Kidney (tissue), 22 donors: ENCODE measurements at regions of chr17 and their contacts with region 1.

Region 1: DNA sequence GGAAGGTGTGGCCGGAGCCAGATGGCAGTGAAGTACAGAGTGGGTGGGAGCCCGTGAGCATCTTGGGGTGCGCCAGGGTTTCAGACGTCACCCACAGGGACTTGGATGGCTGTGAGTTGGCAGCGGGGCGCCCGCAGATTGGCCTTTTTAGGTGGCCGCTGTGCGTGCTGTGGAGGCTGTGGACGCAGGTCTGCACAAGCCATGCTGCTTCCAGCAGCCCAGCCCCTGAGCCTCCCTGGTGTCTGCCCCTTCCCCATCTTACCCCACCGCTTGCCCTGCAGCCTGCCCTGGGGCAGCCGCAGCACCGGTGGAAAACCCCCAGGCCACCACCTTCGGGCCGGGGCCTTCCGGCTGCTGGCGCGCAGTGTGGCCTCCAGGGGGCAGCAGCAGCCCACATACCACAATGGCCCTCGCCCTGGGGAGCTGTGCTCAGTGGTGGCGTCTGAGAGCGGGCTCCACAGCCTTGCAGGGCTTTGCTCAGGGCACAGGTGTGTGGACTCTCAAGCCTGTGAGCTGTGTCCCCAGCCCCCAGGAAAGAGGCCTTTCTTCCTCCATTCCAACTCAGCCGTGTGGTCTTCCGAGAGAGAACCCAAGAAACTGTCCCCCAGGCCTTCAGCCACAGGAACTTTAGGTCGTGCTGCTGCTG is 11.8 kb downstream of the ENDOV start:
- DNase-seq: peak; percentile 71 to 90 (median 81)
- H3K4me3 ChIP-seq: no peak overlapping the region
- H3K27ac ChIP-seq: no peak overlapping the region
- H3K4me1 ChIP-seq: peaks cover 0 to 5% (median 0%) of the 10 kb centered on the region in 3 donors
- H3K27me3 ChIP-seq: no peaks in the 10 kb centered on the region
- CTCF ChIP-seq: peak; percentile 96

Region 2: GRCh38 chr17:79691931-79692330 is 734.9 kb before region 1 on chr17:
- intact Hi-C with region 1: no loop called
- DNase-seq: no peak
- H3K4me3 ChIP-seq: no peak overlapping the region
- H3K27ac ChIP-seq: no peak overlapping the region
- H3K4me1 ChIP-seq: peaks cover 0 to 7% (median 0%) of the 10 kb centered on the region in 3 donors
- H3K27me3 ChIP-seq: no peaks in the 10 kb centered on the region
- CTCF ChIP-seq: no peak

Region 3: DNA sequence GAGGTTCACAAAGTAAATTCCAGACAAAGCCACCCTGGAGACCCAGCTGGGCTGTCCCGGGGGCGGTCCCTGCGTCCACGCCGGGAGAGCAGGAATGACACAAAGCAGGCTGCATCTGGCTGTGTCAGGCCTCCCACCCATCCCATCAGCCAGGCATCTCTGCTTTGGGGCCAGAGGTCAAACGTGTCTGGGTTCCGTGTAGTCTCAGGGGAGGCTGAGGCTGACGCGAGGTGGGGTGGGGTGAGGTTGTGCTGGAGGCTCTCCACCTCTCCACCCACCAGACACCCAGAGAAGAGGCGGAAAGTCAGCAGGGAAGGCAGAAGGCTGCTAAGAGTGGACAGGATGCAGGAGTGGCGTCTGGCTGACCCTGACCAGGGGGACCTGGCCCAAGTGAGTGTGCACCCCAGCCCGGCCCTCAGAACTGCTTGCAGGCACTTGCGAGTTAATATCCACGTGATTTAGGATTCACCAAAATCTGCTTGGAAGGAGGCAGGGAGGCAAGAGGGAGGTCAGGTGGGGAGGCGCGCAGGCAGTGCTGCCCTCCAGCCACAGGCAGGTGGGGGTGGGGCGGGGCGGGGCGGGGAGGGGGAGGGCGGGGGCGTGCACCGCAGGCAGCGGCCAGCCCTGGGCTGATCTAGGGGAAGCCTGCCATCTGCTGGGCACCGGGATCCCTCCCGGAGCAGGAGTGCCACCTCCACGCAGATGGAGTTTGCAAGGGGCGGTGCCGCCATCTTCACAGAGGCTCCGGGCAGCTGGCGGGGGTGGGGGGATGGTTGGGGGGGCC is 435.5 kb before region 1 on chr17:
- intact Hi-C with region 1: no loop called
- DNase-seq: peak; percentile 87 to 95 (median 92)
- H3K4me3 ChIP-seq: peak overlapping the region in 1 of 3 donors; percentile 35
- H3K27ac ChIP-seq: no peak overlapping the region
- H3K4me1 ChIP-seq: peaks cover 6 to 45% (median 39%) of the 10 kb centered on the region in 3 donors
- H3K27me3 ChIP-seq: no peaks in the 10 kb centered on the region
- CTCF ChIP-seq: peak; percentile 79

Region 4: DNA sequence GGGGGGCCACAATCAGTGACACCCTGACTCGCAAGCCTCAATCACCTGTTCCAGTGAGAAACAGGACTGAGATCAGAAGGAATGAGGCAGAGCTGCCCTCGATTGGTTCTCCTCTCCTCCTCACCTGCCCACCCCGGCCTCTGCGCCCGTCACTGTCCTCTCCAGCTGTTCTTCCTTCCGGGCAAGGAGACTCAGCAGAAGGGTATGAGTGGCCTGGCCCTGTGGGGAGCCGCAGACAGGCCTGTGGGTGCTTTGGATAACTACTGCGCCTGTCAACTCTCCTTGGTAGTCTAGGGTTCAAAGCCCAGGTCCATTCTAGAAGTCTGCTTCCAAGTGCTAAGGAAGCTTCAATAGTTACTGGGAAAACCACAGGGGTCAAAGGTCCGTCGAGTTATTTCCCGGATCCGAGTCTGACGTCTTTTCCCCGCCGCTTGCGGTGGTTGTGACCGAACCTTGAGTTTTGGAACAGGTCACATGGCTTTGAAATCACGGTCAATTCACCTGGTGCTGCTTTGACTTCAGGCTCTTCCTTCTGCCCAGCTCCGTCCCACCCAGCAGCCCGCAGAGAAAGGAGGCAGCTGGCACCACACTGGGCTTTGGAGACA is 248.7 kb before region 1 on chr17:
- intact Hi-C with region 1: no loop called
- DNase-seq: no peak
- H3K4me3 ChIP-seq: no peak overlapping the region
- H3K27ac ChIP-seq: no peak overlapping the region
- H3K4me1 ChIP-seq: no peaks in the 10 kb centered on the region
- H3K27me3 ChIP-seq: no peaks in the 10 kb centered on the region
- CTCF ChIP-seq: no peak

Region 5: GRCh38 chr17:80575057-80575875 is 148.5 kb after region 1 on chr17:
- intact Hi-C with region 1: loop called (anchors 10 kb)
- DNase-seq: peak; percentile 87 to 90 (median 88)
- H3K4me3 ChIP-seq: no peak overlapping the region
- H3K27ac ChIP-seq: no peak overlapping the region
- H3K4me1 ChIP-seq: no peaks in the 10 kb centered on the region
- H3K27me3 ChIP-seq: no peaks in the 10 kb centered on the region
- CTCF ChIP-seq: peak; percentile 99

Region 6: GRCh38 chr17:80959330-80960036 is 532.7 kb after region 1 on chr17:
- intact Hi-C with region 1: loop called (anchors 10 kb)
- DNase-seq: peak in 4 of 5 donors; percentile 28 to 93 (median 72)
- H3K4me3 ChIP-seq: no peak overlapping the region
- H3K27ac ChIP-seq: no peak overlapping the region
- H3K4me1 ChIP-seq: no peaks in the 10 kb centered on the region
- H3K27me3 ChIP-seq: no peaks in the 10 kb centered on the region
- CTCF ChIP-seq: no peak

Region 7: DNA sequence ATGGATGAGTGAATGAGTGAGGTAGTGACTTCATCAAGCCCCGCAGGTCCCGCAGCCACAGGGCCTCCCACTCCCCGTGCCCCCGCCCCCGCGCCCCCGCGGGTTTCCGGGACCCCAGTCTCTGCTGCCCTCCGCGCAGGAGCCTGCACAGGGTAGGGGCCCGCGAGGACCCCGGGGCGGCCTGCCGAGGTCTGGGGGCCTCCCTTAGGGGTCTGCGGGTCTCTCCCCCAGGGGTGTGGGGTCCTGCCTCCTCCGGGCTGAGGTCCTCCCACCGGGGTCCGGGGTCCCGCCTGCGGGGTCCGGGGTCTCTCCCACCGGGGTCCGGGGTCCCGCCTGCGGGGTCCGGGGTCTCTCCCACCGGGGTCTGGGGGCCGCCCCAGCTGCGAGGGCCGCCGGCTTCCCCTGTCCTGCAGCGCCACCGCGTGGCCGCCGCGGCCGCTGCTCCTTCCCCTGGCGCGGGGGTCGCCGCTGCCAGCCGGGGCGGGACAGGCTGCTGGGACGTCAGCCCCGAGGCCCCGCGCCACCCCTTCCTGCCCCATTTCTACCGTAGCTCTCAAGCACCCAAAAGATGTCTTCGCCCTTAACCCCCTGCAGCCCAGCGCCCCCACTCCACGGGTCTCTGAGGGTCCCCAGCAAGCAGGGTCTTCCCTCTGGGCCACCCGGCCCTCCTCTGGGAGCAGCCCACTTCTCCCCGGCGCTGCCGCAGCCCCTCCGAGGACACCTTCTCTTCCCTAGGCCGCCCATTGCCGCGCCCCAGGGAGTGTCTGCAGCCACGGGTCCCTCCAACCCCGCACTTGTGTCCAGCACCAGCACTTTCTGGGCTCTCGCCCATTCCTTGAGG is 554.5 kb after region 1 on chr17:
- intact Hi-C with region 1: loop called (anchors 5 kb)
- DNase-seq: no peak
- H3K4me3 ChIP-seq: no peak overlapping the region
- H3K27ac ChIP-seq: no peak overlapping the region
- H3K4me1 ChIP-seq: no peaks in the 10 kb centered on the region
- H3K27me3 ChIP-seq: peaks cover 2% of the 10 kb centered on the region
- CTCF ChIP-seq: peak; percentile 70